H1 (cell line): ENCODE measurements at regions of chr16 and their contacts with region 1.

Region 1: GRCh38 chr16:89909777-89910716 is 8.6 kb upstream of the MC1R start:
- DNase-seq: peak in 1 of 2 experiments; percentile 93
- H3K4me3 ChIP-seq: no peak overlapping the region
- H3K27ac ChIP-seq: peak overlapping the region; percentile 42; the same call in 1 of the 2 replicates
- H3K4me1 ChIP-seq: peaks cover 0 to 2% (median 0%) of the 10 kb centered on the region in 4 experiments; a peak in 4 of 7 replicates
- H3K27me3 ChIP-seq: no peaks in the 10 kb centered on the region
- CTCF ChIP-seq: peak; percentile 91 to 98 (median 97)
- EP300 ChIP-seq: no peak
- POLR2A ChIP-seq: no peak
- RAD21 ChIP-seq: peak; percentile 56 to 76

Region 2: DNA sequence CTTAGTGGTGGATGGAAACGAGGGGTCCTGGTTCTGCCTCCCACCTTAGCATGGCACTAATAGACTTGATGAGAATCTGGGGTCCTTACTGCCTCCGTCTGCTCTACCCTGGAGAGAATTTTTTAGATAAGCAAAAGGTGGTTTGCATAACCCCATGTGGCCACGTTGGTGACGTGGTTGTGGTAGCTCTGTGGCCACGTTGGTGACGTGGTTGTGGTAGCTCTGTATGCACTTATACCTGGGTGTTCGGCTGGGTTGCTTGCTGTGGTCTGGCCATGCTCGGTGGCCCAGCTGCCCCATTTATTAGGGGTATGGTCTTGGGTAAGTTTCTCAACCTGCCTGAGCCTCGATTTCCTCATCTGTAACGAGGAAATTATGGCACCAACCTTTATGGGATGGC is 68.8 kb before region 1 on chr16:
- CTCF ChIA-PET with region 1: no interaction called
- POLR2A ChIA-PET with region 1: no interaction called
- DNase-seq: no peak
- H3K4me3 ChIP-seq: no peak overlapping the region
- H3K27ac ChIP-seq: no peak overlapping the region
- H3K4me1 ChIP-seq: peaks cover 0 to 5% (median 1%) of the 10 kb centered on the region in 4 experiments; a peak in 2 of 7 replicates
- H3K27me3 ChIP-seq: no peaks in the 10 kb centered on the region
- CTCF ChIP-seq: no peak
- EP300 ChIP-seq: no peak
- POLR2A ChIP-seq: no peak
- RAD21 ChIP-seq: no peak

Region 3: DNA sequence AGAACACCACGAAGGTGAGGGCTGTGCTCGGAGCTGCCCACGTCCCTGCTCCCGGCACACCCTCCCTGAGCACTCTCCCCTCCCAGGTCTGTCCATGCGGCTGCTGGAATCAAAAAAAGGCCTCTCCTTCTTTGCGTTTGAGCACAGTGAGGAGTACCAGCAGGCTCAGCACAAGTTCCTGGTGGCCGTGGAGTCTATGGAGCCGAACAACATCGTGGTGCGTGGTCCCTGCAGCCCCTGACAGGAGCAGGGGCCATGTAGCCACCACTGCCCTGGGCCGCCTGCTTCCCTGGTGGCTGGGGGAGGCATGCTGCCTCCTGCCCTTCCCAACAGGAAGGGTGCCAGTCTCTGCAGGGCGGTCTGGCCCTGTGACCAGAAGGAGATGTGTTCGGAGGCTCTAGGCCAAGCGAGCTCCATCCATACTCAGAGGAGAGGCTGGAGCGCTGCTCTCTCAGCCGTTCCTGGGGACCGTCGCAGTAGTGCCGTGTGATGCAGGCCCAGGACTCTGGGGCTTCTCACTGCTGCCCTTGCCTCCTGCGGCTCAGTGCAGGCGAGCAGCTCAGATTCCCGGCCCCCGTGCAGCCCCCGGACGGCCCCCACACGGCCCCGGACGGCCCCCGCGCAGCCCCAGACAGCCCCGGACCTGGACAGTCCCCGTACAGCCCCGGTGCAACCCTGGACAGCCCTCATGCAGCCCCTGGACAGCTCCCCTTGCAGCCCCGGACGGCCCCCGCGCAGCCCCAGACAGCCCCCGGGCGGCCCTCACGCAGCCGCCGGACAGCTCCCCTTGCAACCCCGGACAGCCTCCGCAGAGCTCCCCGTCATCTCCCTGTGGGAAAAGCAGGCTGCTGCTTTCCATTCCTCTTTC is 16.2 kb before region 1 on chr16:
- CTCF ChIA-PET with region 1: interaction called, 41 read pairs
- POLR2A ChIA-PET with region 1: interaction called, 4 read pairs
- DNase-seq: no peak
- H3K4me3 ChIP-seq: no peak overlapping the region
- H3K27ac ChIP-seq: no peak overlapping the region
- H3K4me1 ChIP-seq: no peaks in the 10 kb centered on the region
- H3K27me3 ChIP-seq: no peaks in the 10 kb centered on the region
- CTCF ChIP-seq: no peak
- EP300 ChIP-seq: no peak
- POLR2A ChIP-seq: no peak
- RAD21 ChIP-seq: no peak

Region 4: GRCh38 chr16:89999831-90000574 is 90.0 kb after region 1 on chr16:
- CTCF ChIA-PET with region 1: no interaction called
- POLR2A ChIA-PET with region 1: no interaction called
- DNase-seq: no peak
- H3K4me3 ChIP-seq: no peak overlapping the region
- H3K27ac ChIP-seq: no peak overlapping the region
- H3K4me1 ChIP-seq: no peaks in the 10 kb centered on the region
- H3K27me3 ChIP-seq: no peaks in the 10 kb centered on the region
- CTCF ChIP-seq: peak; percentile 19 to 62 (median 49); a peak in 3 of 4 replicates
- EP300 ChIP-seq: no peak
- POLR2A ChIP-seq: no peak
- RAD21 ChIP-seq: no peak; a peak in 1 of 4 replicates